BJ (cell line): ENCODE measurements at regions of chr6 and their contacts with region 1.

Region 1: GRCh38 chr6:83514866-83515466 is 2.6 kb downstream of the PRSS35 start:
- DNase-seq: no peak
- H3K4me3 ChIP-seq: no peak overlapping the region
- H3K27me3 ChIP-seq: no peaks in the 10 kb centered on the region
- CTCF ChIP-seq: peak; percentile 79

Region 2: GRCh38 chr6:83215131-83216047 is 299.6 kb before region 1 on chr6:
- CTCF ChIA-PET with region 1: interaction called, 302 read pairs
- POLR2A ChIA-PET with region 1: no interaction called
- DNase-seq: no peak
- H3K4me3 ChIP-seq: no peak overlapping the region
- H3K27me3 ChIP-seq: no peaks in the 10 kb centered on the region
- CTCF ChIP-seq: peak; percentile 90

Region 3: GRCh38 chr6:83231146-83231545 is 283.8 kb before region 1 on chr6:
- CTCF ChIA-PET with region 1: interaction called, 302 read pairs
- POLR2A ChIA-PET with region 1: no interaction called
- DNase-seq: peak; percentile 32
- H3K4me3 ChIP-seq: no peak overlapping the region
- H3K27me3 ChIP-seq: no peaks in the 10 kb centered on the region
- CTCF ChIP-seq: no peak

Region 4: DNA sequence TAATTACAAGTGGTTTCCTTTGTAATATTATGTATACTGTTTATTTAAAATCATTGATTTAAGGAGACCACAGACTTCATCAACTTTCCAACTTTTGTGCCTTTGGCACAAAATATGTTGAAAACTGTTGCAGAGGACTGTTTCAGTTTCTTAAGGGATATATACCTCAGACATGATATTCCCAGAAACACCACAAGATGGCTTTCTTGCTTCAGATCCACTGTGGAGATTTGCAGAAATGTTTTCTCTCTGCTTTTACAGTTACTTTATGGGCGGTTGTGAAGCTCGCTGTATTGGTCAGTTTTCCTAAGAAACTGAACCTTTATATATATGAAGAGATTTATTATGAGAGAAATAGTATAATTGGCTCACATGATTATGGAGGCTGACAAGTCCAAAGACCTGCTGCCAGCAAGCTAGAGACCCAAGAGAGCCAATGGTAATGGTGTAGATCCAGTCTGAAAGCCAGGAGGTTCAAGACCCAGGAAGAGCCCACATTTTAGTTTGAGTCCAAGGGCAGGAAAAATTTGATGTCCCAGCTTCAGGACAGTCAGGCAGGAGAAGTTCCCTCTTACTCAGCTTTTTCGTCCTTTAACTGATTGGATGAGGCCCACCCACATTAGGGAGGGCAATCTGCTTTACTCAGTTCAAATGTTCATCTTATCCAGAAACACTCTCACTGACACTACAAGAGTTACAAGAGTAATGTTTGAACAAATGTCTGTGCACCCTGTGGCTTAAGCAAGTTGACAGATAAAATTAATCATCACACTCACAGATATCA is 96.9 kb before region 1 on chr6:
- CTCF ChIA-PET with region 1: interaction called, 160 read pairs
- POLR2A ChIA-PET with region 1: no interaction called
- DNase-seq: no peak
- H3K4me3 ChIP-seq: no peak overlapping the region
- H3K27me3 ChIP-seq: no peaks in the 10 kb centered on the region
- CTCF ChIP-seq: peak; percentile 66